Transverse colon (tissue), 4 donors: ENCODE measurements at regions of chr15 and their contacts with region 1.

Region 1: DNA sequence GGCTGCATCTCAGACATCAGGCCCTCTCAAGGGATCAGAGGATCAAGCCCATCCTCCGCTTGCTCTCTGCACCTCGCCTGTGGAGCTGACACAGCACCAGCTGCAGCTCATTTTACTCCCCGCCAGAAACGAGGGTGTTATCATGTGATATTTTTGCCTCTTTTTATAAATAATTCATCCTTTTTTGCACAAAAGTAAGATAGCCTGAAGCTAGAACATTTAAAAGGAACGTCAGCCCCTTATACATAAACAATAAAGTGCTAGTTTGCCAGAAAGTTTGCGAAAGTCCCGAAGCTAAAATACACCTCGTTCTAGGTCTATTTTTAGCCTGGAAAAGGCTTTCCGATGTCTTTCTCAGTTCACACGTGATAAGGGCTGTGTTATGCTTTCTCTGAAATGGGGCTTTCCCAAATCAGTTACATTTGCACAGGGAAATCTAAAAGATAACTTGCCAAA is 9.6 kb upstream of the FAM174B start:
- DNase-seq: no peak
- H3K4me3 ChIP-seq: no peak overlapping the region
- H3K27ac ChIP-seq: peak overlapping the region; percentile 69 to 76 (median 70)
- H3K4me1 ChIP-seq: peaks cover 10 to 38% (median 22%) of the 10 kb centered on the region in 4 donors
- H3K27me3 ChIP-seq: no peaks in the 10 kb centered on the region
- CTCF ChIP-seq: no peak
- EP300 ChIP-seq: peak; percentile 75
- POLR2A ChIP-seq: no peak

Region 2: DNA sequence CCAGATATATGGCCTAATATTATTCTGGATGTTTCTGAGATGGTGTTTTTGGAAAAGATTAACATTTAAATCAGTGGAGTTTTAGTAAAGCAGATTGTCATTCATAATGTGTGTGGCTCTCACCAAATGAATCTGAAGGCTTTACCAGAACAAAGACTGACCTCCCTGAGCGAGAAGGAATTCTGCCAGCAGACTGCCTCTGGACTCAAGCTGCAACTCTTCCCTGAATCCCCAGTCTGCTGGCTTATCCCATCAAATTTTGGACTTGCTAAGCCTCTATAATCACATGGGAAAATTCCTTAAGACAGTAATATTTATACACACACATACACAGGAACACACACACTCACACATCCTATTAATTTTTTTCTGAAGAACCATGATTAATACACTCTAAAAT is 111.8 kb before region 1 on chr15:
- in situ Hi-C with region 1: no loop called
- intact Hi-C with region 1: no loop called
- DNase-seq: no peak
- H3K4me3 ChIP-seq: no peak overlapping the region
- H3K27ac ChIP-seq: no peak overlapping the region
- H3K4me1 ChIP-seq: no peaks in the 10 kb centered on the region
- H3K27me3 ChIP-seq: no peaks in the 10 kb centered on the region
- CTCF ChIP-seq: no peak
- EP300 ChIP-seq: no peak
- POLR2A ChIP-seq: no peak

Region 3: GRCh38 chr15:92617549-92618520 is 47.3 kb before region 1 on chr15:
- in situ Hi-C with region 1: no loop called
- intact Hi-C with region 1: loop called (anchors 10 kb)
- DNase-seq: peak; percentile 71
- H3K4me3 ChIP-seq: no peak overlapping the region
- H3K27ac ChIP-seq: peak overlapping the region; percentile 70 to 77 (median 75)
- H3K4me1 ChIP-seq: peaks cover 3 to 38% (median 34%) of the 10 kb centered on the region in 4 donors
- H3K27me3 ChIP-seq: no peaks in the 10 kb centered on the region
- CTCF ChIP-seq: no peak
- EP300 ChIP-seq: peak; percentile 20
- POLR2A ChIP-seq: no peak

Region 4: GRCh38 chr15:92645030-92645756 is 19.9 kb before region 1 on chr15:
- in situ Hi-C with region 1: no loop called
- intact Hi-C with region 1: no loop called
- DNase-seq: no peak
- H3K4me3 ChIP-seq: no peak overlapping the region
- H3K27ac ChIP-seq: peak overlapping the region in 2 of 4 donors; percentile 26 to 46
- H3K4me1 ChIP-seq: peaks cover 0 to 1% (median 0%) of the 10 kb centered on the region in 4 donors
- H3K27me3 ChIP-seq: no peaks in the 10 kb centered on the region
- CTCF ChIP-seq: no peak
- EP300 ChIP-seq: no peak
- POLR2A ChIP-seq: no peak

Region 5: DNA sequence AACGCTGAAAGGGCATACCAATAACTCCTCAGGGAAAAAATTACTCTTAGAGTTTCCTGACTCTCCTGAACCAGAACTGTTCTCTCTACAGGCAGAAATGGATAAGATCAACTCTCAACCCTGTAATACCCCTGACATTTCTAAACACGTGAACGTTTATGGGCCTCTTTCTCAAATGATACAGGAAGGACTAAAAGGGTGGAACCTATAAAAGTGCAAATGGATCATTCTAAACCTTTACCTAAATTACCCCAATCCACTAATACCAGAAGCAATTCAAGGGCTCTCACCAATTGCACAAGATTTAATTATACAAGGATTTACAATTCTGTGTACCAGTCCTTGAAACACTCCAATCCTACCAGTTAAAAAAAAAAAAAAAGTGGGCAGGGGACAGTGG is 88.5 kb after region 1 on chr15:
- in situ Hi-C with region 1: no loop called
- intact Hi-C with region 1: no loop called
- DNase-seq: no peak
- H3K4me3 ChIP-seq: no peak overlapping the region
- H3K27ac ChIP-seq: no peak overlapping the region
- H3K4me1 ChIP-seq: no peaks in the 10 kb centered on the region
- H3K27me3 ChIP-seq: no peaks in the 10 kb centered on the region
- CTCF ChIP-seq: no peak
- EP300 ChIP-seq: no peak
- POLR2A ChIP-seq: no peak